AG04450 (cell line): ENCODE measurements at regions of chr11 and their contacts with region 1.

Region 1: DNA sequence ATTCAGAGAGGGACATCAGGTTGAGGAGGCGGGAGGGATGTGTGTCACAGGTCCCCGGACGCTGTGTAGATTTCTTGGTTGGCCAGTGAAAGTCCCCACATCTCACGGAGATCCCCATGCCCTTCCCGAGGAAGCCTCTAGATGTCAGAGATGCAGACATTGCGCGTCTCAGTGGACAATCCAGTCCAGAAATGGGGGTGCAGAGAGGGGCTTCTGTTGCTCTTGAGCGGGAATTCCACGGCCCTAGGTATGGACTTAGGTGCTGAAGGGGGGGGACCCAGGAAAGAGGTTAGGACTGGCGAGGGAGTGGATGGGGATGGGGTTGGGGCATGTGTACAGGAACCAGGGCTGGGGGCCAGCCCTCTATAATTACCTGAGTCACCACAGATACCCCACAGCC is 7.0 kb downstream of the THY1 start:
- DNase-seq: no peak
- H3K4me3 ChIP-seq: no peak overlapping the region
- H3K27ac ChIP-seq: no peak overlapping the region
- H3K27me3 ChIP-seq: no peaks in the 10 kb centered on the region
- CTCF ChIP-seq: no peak

Region 2: DNA sequence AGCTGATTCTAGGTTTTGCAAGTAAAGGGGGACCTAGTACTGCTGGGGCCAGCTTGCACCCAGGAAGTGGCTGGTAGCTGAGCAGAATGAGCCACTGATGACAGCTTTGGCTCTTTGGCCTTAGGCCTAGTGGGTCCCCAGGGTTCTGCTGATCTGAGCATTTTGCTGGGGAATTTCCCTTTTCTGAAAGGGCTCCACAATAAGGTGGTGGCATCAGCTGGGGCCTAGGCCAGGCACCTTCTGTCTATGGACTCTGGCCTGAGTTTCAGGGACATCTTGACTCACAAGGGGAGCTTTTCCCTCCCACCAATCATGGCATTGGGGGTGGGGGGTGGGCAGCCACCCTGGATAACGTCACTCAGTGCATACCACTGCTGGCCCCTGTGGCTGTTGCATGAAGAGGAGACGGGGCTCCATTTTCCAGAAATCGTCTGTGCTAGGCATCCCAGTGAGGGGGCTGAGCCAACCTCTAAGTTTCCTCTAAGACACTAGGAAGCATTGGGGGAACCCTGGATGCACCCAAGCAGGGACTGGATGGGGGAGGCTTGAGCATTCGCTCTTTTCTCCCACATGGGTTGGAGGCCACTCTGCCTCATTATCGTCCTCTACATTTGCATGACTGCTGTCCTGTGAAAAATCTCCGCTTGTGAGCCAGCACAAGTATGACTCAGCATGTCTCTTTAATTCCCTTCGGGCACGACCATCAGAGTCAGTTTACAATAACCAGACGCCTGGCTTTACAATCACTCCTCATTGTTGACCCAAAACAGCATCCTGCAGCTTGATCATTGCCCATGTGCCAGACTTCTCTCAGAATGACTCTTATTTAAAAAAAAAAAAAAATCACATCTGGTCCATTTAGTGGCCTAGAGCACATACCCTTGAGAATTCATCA is 152.0 kb after region 1 on chr11:
- CTCF ChIA-PET with region 1: interaction called, 12 read pairs
- POLR2A ChIA-PET with region 1: no interaction called
- DNase-seq: peak; percentile 36
- H3K4me3 ChIP-seq: no peak overlapping the region
- H3K27ac ChIP-seq: no peak overlapping the region
- H3K27me3 ChIP-seq: peaks cover 9% of the 10 kb centered on the region
- CTCF ChIP-seq: no peak